Activated B cell treated with CpG ODN at 0.5 μM for 24 hours (primary cell): ENCODE measurements at regions of chr13 and their contacts with region 1.

Region 1: DNA sequence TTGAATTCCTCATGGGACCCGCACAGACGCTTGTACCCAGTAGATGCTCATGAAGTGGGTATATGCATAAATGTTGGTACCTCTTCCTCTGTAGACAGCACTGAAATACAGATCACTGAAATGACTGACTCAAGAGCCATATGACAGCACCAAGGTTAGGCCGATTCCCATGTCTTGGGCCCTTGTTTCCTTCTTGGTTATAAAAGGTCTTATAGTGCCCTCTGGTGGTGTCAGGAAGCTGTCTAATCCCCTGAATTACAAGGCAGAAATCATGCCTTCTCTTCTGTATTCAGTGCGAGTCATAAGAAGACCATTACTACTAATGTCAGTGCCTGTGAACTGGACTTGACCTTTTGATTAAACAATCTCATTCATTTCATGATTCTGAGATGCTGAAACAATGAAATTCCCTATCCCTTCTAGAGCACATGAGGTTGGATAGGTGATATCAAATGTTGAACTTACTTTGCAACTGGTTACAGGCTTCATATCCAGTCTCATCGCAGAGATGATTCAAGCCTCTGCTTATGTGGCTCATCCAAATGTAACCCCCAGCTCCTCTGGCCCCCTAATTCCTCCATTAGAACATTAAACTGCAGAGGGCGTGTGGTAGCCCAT is 59.7 kb downstream of the SPATA13 start:
- DNase-seq: no peak
- ATAC-seq: peak; percentile 61
- H3K4me3 Mint-ChIP-seq: no peak overlapping the region
- H3K27ac Mint-ChIP-seq: no peak overlapping the region
- H3K4me1 Mint-ChIP-seq: peaks cover 53% of the 10 kb centered on the region
- H3K27me3 Mint-ChIP-seq: no peaks in the 10 kb centered on the region
- CTCF ChIP-seq: no peak

Region 2: DNA sequence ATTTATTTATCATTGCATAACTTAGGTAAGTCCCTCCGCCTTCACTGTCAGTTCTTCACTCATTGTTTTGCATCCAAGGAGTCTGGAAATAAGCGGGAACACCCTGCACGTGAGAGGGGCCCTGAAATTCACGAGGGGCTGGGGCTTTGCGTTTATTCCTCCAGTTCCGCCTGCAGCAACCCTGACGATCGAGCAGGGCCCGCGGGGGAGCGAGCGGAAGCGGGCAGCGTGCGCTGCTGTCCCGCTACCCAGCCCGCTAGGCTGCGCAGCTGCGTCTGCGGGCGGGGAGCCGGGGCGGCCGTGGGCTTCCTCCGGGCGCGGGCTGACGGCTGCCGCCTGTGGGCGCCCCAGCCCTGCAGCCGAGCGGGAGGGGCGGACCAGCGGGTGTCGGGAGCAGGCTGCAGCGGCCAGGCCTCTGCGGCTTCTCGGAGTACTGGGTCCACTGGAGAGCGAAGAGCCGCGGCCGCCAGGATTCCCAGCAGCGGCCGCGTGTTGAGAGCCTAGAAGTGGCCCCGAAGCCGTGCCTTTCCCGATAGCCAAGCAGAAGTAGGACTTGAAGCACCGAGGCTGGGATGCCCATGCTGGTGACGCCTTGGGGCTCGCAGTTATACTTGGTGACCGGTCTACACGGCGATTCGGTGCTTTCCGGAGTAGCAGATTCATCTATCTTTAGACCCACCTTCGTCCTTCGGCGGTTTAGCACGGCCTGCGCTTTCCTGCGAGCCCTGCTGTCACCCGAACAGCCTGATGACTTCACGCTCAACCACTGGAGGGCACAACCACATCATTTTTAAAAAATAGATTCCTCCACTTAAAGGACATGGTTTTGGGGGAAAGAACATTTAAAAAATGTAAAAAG is 753.8 kb before region 1 on chr13:
- CTCF ChIA-PET with region 1: interaction called, 3 read pairs
- POLR2A ChIA-PET with region 1: no interaction called
- intact Hi-C with region 1: loop called (anchors 2 kb)
- DNase-seq: peak; percentile 51
- ATAC-seq: peak; percentile 88
- H3K4me3 Mint-ChIP-seq: peak overlapping the region; percentile 79
- H3K27ac Mint-ChIP-seq: no peak overlapping the region
- H3K4me1 Mint-ChIP-seq: peaks cover 8% of the 10 kb centered on the region
- H3K27me3 Mint-ChIP-seq: peaks cover 19% of the 10 kb centered on the region
- CTCF ChIP-seq: no peak

Region 3: GRCh38 chr13:23921451-23921888 is 298.7 kb before region 1 on chr13:
- CTCF ChIA-PET with region 1: no interaction called
- POLR2A ChIA-PET with region 1: no interaction called
- intact Hi-C with region 1: loop called (anchors 1 kb)
- DNase-seq: no peak
- ATAC-seq: no peak
- H3K4me3 Mint-ChIP-seq: no peak overlapping the region
- H3K27ac Mint-ChIP-seq: no peak overlapping the region
- H3K4me1 Mint-ChIP-seq: no peaks in the 10 kb centered on the region
- H3K27me3 Mint-ChIP-seq: peaks cover 42% of the 10 kb centered on the region
- CTCF ChIP-seq: no peak

Region 4: GRCh38 chr13:24020375-24020830 is 199.8 kb before region 1 on chr13:
- CTCF ChIA-PET with region 1: interaction called, 7 read pairs
- POLR2A ChIA-PET with region 1: no interaction called
- intact Hi-C with region 1: loop called (anchors 1 kb)
- DNase-seq: no peak
- ATAC-seq: no peak
- H3K4me3 Mint-ChIP-seq: no peak overlapping the region
- H3K27ac Mint-ChIP-seq: no peak overlapping the region
- H3K4me1 Mint-ChIP-seq: no peaks in the 10 kb centered on the region
- H3K27me3 Mint-ChIP-seq: no peaks in the 10 kb centered on the region
- CTCF ChIP-seq: no peak

Region 5: DNA sequence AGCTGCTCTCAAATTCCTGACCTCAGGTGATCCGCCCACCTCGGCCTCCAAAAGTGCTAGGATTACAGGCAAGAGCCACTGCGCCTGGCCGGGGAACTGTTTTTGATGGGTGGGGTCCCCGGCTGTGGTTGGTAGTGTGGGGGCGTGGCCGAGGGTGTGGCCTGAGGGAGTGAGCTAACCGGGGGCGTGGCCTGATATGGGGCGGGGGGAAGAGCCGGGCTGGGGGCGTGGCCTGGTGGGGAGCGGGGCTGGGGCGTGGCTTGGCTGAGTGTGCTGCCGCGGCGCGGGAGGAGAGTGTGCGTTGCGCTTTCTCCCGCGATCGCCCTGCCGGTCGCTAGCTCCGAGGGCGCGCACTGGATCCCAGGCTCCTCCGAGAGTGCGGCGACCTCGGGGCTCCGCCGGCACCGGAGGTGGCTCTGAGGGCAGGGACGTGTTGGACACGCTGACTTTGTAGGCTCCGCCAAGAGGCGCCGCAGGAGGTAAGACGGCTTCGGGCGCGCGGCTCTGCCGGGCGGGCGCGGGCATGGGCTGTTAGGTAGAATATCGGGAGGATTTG is 59.7 kb before region 1 on chr13 and contains the start of gene SPATA13:
- CTCF ChIA-PET with region 1: interaction called, 3 read pairs
- POLR2A ChIA-PET with region 1: interaction called, 9 read pairs
- intact Hi-C with region 1: loop called (anchors 1 kb)
- DNase-seq: peak; percentile 86
- ATAC-seq: peak; percentile 98
- H3K4me3 Mint-ChIP-seq: peak within 1 kb of the TSS; percentile 83
- H3K27ac Mint-ChIP-seq: no peak within 1 kb of the TSS
- H3K4me1 Mint-ChIP-seq: peaks cover 18% of the 10 kb centered on the region
- H3K27me3 Mint-ChIP-seq: peaks cover 11% of the 10 kb centered on the region
- CTCF ChIP-seq: no peak
- total RNA-seq, gene SPATA13: 10.6 and 11.8 TPM in 2 replicates

Region 6: DNA sequence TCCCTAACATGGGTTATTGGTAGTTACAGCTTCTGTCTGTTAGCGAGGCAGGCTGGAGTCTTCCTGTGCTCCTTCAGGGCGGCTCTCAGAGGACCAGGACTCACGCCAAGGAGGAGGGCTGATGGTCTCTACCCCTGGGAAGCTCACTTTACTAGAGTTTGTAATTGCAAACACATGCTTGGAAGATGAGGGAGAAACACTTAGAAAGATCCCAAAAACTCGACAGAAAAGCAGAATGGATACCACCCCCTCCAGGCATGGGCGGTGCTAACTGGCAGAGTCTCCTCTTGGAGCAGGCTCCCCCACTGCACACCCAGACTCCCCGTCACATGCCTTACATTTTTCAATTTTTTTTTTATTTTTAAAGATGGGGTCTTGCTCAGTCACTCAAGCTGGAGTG is 230.3 kb after region 1 on chr13:
- CTCF ChIA-PET with region 1: no interaction called
- POLR2A ChIA-PET with region 1: no interaction called
- intact Hi-C with region 1: no loop called
- DNase-seq: no peak
- ATAC-seq: no peak
- H3K4me3 Mint-ChIP-seq: no peak overlapping the region
- H3K27ac Mint-ChIP-seq: no peak overlapping the region
- H3K4me1 Mint-ChIP-seq: no peaks in the 10 kb centered on the region
- H3K27me3 Mint-ChIP-seq: no peaks in the 10 kb centered on the region
- CTCF ChIP-seq: no peak